ENCODE measurements at regions of chr18 and their contacts with region 1.

Region 1: DNA sequence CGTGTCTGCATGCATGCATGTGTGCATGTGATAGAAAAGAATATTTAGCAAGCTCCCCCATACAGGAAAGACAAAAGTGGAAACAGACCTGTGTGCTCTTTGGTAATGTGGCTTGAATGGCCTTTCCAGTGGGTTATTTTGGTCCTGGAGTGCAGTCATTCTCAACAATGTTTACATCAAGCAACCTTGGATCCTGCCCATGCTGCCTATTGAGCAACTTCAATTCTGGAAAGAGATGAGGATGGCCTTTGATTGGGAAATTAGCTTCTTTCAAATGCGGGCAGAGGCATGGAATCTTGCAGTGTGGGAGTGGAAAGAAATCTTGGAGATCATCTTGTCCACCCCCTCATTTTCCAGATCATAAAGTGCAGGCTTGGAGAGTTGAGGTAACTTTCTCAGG is 87.2 kb upstream of the SMAD2 start:
- DNase-seq: no peak
- H3K4me3 ChIP-seq: no peak overlapping the region
- H3K27ac ChIP-seq: no peak overlapping the region
- H3K4me1 ChIP-seq: peaks cover 3% of the 10 kb centered on the region
- H3K27me3 ChIP-seq: no peaks in the 10 kb centered on the region
- CTCF ChIP-seq: no peak

Region 2: DNA sequence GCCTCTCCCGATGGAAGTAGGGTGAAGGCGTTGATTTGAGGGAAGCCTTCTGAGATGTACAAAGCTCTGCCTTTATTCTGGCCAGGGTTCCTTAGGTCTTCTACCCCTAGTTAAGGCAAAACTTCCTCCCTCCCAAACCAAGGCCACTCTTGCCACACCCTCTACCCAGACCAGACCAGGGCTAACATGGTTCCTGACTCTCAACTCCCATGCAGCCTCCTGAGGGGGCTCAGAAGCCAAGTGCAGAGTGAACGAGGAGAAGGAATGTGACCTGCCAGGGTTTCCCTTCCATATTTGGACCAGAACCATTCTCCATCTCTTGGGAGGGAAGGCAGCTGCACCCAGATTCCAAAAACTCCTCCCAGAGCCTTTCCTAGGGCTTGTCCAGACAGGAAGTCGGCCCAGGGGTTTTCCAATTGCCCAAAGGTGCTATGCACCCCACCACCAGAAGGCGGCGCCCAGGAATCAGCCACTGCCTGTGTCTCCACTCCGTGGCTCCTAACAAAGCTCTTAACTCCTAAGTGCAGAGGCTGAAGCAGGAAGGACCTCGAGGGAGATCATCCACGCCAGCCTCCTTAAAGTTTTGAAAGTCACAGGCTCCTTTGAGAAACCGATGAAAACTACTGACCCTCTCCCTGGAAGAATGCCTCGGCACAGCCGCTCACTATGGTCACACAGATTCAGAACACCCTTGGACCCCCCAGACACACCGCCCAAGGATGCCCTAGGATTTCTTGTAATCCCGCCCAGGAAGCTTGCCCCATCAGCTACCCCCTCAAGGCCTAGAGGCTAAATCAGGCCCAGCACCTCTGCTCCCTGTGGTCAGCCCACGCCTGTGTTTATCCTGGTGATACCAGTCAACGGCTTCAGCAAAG is 245.0 kb before region 1 on chr18:
- CTCF ChIA-PET with region 1: no interaction called
- dilution Hi-C with region 1: no loop called
- in situ Hi-C with region 1: loop called (anchors 5 kb)
- intact Hi-C with region 1: loop called (anchors 1 kb)
- DNase-seq: peak; percentile 80
- H3K4me3 ChIP-seq: no peak overlapping the region
- H3K27ac ChIP-seq: no peak overlapping the region
- H3K4me1 ChIP-seq: peaks cover 4% of the 10 kb centered on the region
- H3K27me3 ChIP-seq: no peaks in the 10 kb centered on the region
- CTCF ChIP-seq: peak; percentile 92

Region 3: GRCh38 chr18:47944972-47945843 is 72.4 kb before region 1 on chr18:
- CTCF ChIA-PET with region 1: no interaction called
- dilution Hi-C with region 1: no loop called
- in situ Hi-C with region 1: no loop called
- intact Hi-C with region 1: no loop called
- DNase-seq: peak; percentile 95
- H3K4me3 ChIP-seq: no peak overlapping the region
- H3K27ac ChIP-seq: no peak overlapping the region
- H3K4me1 ChIP-seq: peaks cover 12% of the 10 kb centered on the region
- H3K27me3 ChIP-seq: no peaks in the 10 kb centered on the region
- CTCF ChIP-seq: no peak

Measured in mammary epithelial cell (primary cell).